K562 (cell line): ENCODE measurements at regions of chr1 and their contacts with region 1.

Region 1: GRCh38 chr1:68346188-68346808 is 103.5 kb downstream of the RPE65 start:
- DNase-seq: peak in 2 of 4 experiments; percentile 7 to 19
- ATAC-seq: no peak; the same call in 2 of the 3 replicates
- H3K4me3 ChIP-seq: no peak overlapping the region
- H3K27ac ChIP-seq: no peak overlapping the region
- H3K4me1 ChIP-seq: no peaks in the 10 kb centered on the region
- H3K27me3 ChIP-seq: no peaks in the 10 kb centered on the region
- CTCF ChIP-seq: peak; percentile 26 to 47 (median 38); a peak in 4 of 6 replicates
- EP300 ChIP-seq: no peak
- POLR2A ChIP-seq: no peak
- RAD21 ChIP-seq: peak; percentile 20 to 51; a peak in 3 of 4 replicates

Region 2: GRCh38 chr1:68057564-68057963 is 288.7 kb before region 1 on chr1:
- CTCF ChIA-PET with region 1: no interaction called
- POLR2A ChIA-PET with region 1: no interaction called
- in situ Hi-C with region 1: no loop called
- intact Hi-C with region 1: loop called (anchors 5 kb)
- DNase-seq: no peak
- ATAC-seq: peak; percentile 95
- H3K4me3 ChIP-seq: no peak overlapping the region
- H3K27ac ChIP-seq: no peak overlapping the region
- H3K4me1 ChIP-seq: no peaks in the 10 kb centered on the region
- H3K27me3 ChIP-seq: no peaks in the 10 kb centered on the region
- CTCF ChIP-seq: peak in 2 of 3 experiments; percentile 26 to 64; a peak in 3 of 6 replicates
- EP300 ChIP-seq: no peak
- POLR2A ChIP-seq: no peak
- RAD21 ChIP-seq: no peak; a peak in 1 of 4 replicates

Region 3: GRCh38 chr1:68120136-68120791 is 226.0 kb before region 1 on chr1:
- CTCF ChIA-PET with region 1: interaction called, 14 read pairs
- POLR2A ChIA-PET with region 1: interaction called, 4 read pairs
- in situ Hi-C with region 1: loop called (anchors 5 kb)
- intact Hi-C with region 1: loop called (anchors 1 kb)
- DNase-seq: peak; percentile 55 to 70 (median 66)
- ATAC-seq: peak; percentile 85
- H3K4me3 ChIP-seq: no peak overlapping the region
- H3K27ac ChIP-seq: no peak overlapping the region
- H3K4me1 ChIP-seq: no peaks in the 10 kb centered on the region
- H3K27me3 ChIP-seq: 0 out of 5 replicates have a peak, but pooled peaks cover 0 to 4% of the 10 kb centered on the region in 2 experiments
- CTCF ChIP-seq: peak; percentile 63 to 85 (median 80)
- EP300 ChIP-seq: no peak
- POLR2A ChIP-seq: no peak
- RAD21 ChIP-seq: peak; percentile 82 to 88

Region 4: DNA sequence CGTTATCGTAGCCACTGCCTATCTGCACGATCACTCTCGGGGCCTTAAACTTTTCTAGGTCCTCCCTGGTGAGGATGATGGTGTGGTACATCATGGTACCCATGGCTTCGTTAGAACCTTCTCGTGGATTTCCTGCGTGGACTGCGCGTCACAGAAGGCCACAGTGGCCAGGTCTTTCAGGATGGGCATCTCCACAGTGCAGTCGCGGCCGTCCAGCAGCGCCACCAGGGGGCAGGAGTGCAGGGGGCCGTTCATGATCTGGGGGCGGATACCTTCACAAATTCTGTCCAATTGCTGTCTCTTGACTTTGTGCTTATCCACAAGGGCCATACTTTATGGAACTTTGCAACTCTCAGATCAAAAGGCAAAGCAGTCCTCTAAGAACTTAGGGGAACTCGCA is 183.5 kb before region 1 on chr1:
- CTCF ChIA-PET with region 1: interaction called, 3 read pairs
- POLR2A ChIA-PET with region 1: no interaction called
- in situ Hi-C with region 1: no loop called
- intact Hi-C with region 1: loop called (anchors 2 kb)
- DNase-seq: peak; percentile 10 to 40 (median 18)
- ATAC-seq: peak; percentile 98
- H3K4me3 ChIP-seq: no peak overlapping the region
- H3K27ac ChIP-seq: no peak overlapping the region
- H3K4me1 ChIP-seq: peaks cover 0 to 3% of the 10 kb centered on the region in 2 experiments; a peak in 1 of 5 replicates
- H3K27me3 ChIP-seq: peaks cover 4 to 13% of the 10 kb centered on the region in 2 experiments; a peak in 2 of 5 replicates
- CTCF ChIP-seq: peak; percentile 46 to 67 (median 64)
- EP300 ChIP-seq: no peak
- POLR2A ChIP-seq: no peak
- RAD21 ChIP-seq: peak; percentile 21 to 65; a peak in 3 of 4 replicates

Region 5: GRCh38 chr1:68291688-68292384 is 54.5 kb before region 1 on chr1:
- CTCF ChIA-PET with region 1: no interaction called
- POLR2A ChIA-PET with region 1: no interaction called
- in situ Hi-C with region 1: no loop called
- intact Hi-C with region 1: no loop called
- DNase-seq: peak in 2 of 4 experiments; percentile 44 to 61
- ATAC-seq: peak; percentile 81
- H3K4me3 ChIP-seq: no peak overlapping the region
- H3K27ac ChIP-seq: no peak overlapping the region
- H3K4me1 ChIP-seq: no peaks in the 10 kb centered on the region; a peak in 2 of 5 replicates
- H3K27me3 ChIP-seq: peaks cover 9 to 29% of the 10 kb centered on the region in 2 experiments; a peak in 4 of 5 replicates
- CTCF ChIP-seq: no peak
- EP300 ChIP-seq: peak; percentile 67
- POLR2A ChIP-seq: no peak
- RAD21 ChIP-seq: no peak

Region 6: DNA sequence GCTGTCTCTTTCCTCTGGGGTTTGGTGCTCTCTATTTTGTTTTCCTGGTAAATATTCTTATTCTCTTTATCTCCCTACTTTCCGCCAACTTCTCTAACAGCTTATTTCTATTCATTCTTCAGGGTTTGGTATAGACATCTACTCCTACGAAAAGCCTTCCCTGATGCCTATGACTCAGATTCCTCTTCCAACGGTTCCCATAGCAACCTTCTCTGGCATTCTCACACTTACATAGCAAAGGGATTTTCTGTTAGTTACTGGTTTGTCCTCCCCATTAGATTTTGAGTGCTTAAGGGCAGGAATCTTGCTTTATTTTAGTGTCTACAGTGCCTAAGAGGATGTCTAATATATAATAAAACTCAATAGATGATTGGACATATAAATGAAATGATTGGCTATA is 558.2 kb after region 1 on chr1:
- CTCF ChIA-PET with region 1: no interaction called
- POLR2A ChIA-PET with region 1: no interaction called
- in situ Hi-C with region 1: no loop called
- intact Hi-C with region 1: no loop called
- DNase-seq: no peak
- ATAC-seq: no peak
- H3K4me3 ChIP-seq: no peak overlapping the region
- H3K27ac ChIP-seq: no peak overlapping the region
- H3K4me1 ChIP-seq: no peaks in the 10 kb centered on the region
- H3K27me3 ChIP-seq: no peaks in the 10 kb centered on the region
- CTCF ChIP-seq: no peak
- EP300 ChIP-seq: no peak
- POLR2A ChIP-seq: no peak
- RAD21 ChIP-seq: no peak